Endothelial cell of umbilical vein (primary cell): ENCODE measurements at regions of chr15 and their contacts with region 1.

Region 1: DNA sequence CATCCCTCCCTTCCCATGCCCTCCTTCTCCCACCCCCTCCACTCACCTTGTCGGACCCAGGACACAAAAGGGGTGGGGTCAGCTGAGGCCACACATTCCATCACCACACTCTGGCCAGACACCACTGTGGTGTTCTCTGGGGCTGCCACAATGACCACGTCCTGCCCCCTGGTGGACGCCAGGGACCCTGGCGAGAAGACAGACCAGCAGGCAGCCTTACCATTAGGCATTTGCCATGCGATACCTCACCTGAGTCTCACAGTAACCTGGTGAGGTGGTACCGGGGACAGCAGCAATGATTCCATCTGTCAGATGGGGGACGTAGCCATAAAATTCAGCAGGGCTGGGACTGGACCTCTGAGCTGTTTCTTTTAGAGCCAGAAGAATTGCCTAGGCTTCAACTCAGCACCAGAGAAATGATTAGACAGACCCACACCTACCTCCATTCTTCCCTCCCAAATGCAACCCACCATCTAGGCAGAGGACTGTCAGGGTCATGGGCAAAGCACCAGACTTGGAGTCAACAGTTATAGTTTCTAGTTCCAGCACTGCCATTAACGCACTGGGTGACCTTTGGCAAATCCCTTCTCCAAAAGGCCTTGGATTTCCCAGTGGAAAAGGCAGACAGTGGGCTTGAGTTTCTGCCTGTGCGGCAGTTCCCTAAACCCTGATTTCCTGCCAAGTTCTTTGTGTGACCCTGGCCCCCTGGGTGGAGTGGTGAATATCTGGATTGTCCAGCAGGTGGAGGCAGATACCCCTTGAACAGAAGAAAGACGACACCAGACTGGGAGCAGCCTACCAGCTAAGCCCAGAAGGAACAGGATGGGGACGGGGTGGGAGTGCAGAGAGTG is 21.8 kb downstream of the IGDCC4 start:
- DNase-seq: peak; percentile 75
- H3K4me3 ChIP-seq: no peak overlapping the region
- H3K27ac ChIP-seq: no peak overlapping the region
- H3K4me1 ChIP-seq: no peaks in the 10 kb centered on the region
- H3K27me3 ChIP-seq: peaks cover 27 to 28% of the 10 kb centered on the region in 2 experiments
- CTCF ChIP-seq: peak; percentile 71 to 95
- POLR2A ChIP-seq: no peak

Region 2: GRCh38 chr15:65231306-65231705 is 169.7 kb before region 1 on chr15:
- CTCF ChIA-PET with region 1: no interaction called
- POLR2A ChIA-PET with region 1: no interaction called
- dilution Hi-C with region 1: no loop called
- intact Hi-C with region 1: no loop called
- DNase-seq: no peak
- H3K4me3 ChIP-seq: no peak overlapping the region
- H3K27ac ChIP-seq: no peak overlapping the region
- H3K4me1 ChIP-seq: no peaks in the 10 kb centered on the region
- H3K27me3 ChIP-seq: no peaks in the 10 kb centered on the region
- CTCF ChIP-seq: no peak
- POLR2A ChIP-seq: no peak

Region 3: GRCh38 chr15:65318870-65319356 is 82.1 kb before region 1 on chr15:
- CTCF ChIA-PET with region 1: interaction called, 94 read pairs
- POLR2A ChIA-PET with region 1: no interaction called
- dilution Hi-C with region 1: no loop called
- intact Hi-C with region 1: loop called (anchors 1 kb)
- DNase-seq: peak; percentile 79
- H3K4me3 ChIP-seq: no peak overlapping the region
- H3K27ac ChIP-seq: no peak overlapping the region
- H3K4me1 ChIP-seq: no peaks in the 10 kb centered on the region
- H3K27me3 ChIP-seq: peaks cover 0 to 10% of the 10 kb centered on the region in 2 experiments
- CTCF ChIP-seq: peak; percentile 75 to 87
- POLR2A ChIP-seq: no peak

Region 4: GRCh38 chr15:65326117-65326526 is 74.9 kb before region 1 on chr15:
- CTCF ChIA-PET with region 1: interaction called, 94 read pairs
- POLR2A ChIA-PET with region 1: no interaction called
- dilution Hi-C with region 1: no loop called
- intact Hi-C with region 1: no loop called
- DNase-seq: peak; percentile 92
- H3K4me3 ChIP-seq: no peak overlapping the region
- H3K27ac ChIP-seq: no peak overlapping the region
- H3K4me1 ChIP-seq: peaks cover 3% of the 10 kb centered on the region
- H3K27me3 ChIP-seq: peaks cover 0 to 7% of the 10 kb centered on the region in 2 experiments
- CTCF ChIP-seq: no peak
- POLR2A ChIP-seq: no peak

Region 5: GRCh38 chr15:65384895-65385858 is 15.8 kb before region 1 on chr15:
- CTCF ChIA-PET with region 1: interaction called, 50 read pairs
- POLR2A ChIA-PET with region 1: no interaction called
- dilution Hi-C with region 1: no loop called
- intact Hi-C with region 1: loop called (anchors 1 kb)
- DNase-seq: peak; percentile 82
- H3K4me3 ChIP-seq: no peak overlapping the region
- H3K27ac ChIP-seq: no peak overlapping the region
- H3K4me1 ChIP-seq: peaks cover 6% of the 10 kb centered on the region
- H3K27me3 ChIP-seq: peaks cover 8 to 13% of the 10 kb centered on the region in 2 experiments
- CTCF ChIP-seq: peak; percentile 96
- POLR2A ChIP-seq: no peak

Region 6: GRCh38 chr15:65421360-65422070 is 20.5 kb after region 1 on chr15:
- CTCF ChIA-PET with region 1: interaction called, 16 read pairs
- POLR2A ChIA-PET with region 1: no interaction called
- dilution Hi-C with region 1: no loop called
- intact Hi-C with region 1: no loop called
- DNase-seq: no peak
- H3K4me3 ChIP-seq: peak overlapping the region in 1 of 3 experiments; percentile 14
- H3K27ac ChIP-seq: no peak overlapping the region
- H3K4me1 ChIP-seq: peaks cover 9% of the 10 kb centered on the region
- H3K27me3 ChIP-seq: peaks cover 37 to 43% of the 10 kb centered on the region in 2 experiments
- CTCF ChIP-seq: no peak
- POLR2A ChIP-seq: no peak

Region 7: DNA sequence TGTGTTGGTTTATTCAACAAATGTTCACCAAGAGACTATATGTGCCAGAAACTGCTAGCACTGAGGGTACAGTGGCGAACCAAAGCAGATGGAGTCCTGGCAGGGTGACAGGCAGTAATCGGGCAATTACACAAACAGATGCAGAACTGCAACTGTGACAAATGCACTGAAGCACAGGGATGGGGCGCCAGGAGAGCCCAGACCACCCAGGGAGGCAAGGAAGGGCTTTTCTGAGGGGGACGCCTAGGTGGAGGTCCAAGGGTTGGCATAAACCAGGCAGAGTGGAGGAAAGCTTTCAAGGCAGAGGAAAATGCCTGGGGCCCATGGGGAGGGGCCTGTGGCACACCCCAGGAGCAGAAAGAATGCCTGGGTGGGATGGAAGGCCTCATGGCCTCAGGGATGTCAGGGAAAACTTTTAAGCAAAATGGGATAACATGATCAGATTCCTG is 897.8 kb after region 1 on chr15:
- CTCF ChIA-PET with region 1: no interaction called
- POLR2A ChIA-PET with region 1: no interaction called
- dilution Hi-C with region 1: no loop called
- intact Hi-C with region 1: no loop called
- DNase-seq: no peak
- H3K4me3 ChIP-seq: no peak overlapping the region
- H3K27ac ChIP-seq: no peak overlapping the region
- H3K4me1 ChIP-seq: peaks cover 22% of the 10 kb centered on the region
- H3K27me3 ChIP-seq: no peaks in the 10 kb centered on the region
- CTCF ChIP-seq: no peak
- POLR2A ChIP-seq: no peak